Right ventricle myocardium superior (tissue), 1 donor: ENCODE measurements at regions of chr4 and their contacts with region 1.

Region 1: DNA sequence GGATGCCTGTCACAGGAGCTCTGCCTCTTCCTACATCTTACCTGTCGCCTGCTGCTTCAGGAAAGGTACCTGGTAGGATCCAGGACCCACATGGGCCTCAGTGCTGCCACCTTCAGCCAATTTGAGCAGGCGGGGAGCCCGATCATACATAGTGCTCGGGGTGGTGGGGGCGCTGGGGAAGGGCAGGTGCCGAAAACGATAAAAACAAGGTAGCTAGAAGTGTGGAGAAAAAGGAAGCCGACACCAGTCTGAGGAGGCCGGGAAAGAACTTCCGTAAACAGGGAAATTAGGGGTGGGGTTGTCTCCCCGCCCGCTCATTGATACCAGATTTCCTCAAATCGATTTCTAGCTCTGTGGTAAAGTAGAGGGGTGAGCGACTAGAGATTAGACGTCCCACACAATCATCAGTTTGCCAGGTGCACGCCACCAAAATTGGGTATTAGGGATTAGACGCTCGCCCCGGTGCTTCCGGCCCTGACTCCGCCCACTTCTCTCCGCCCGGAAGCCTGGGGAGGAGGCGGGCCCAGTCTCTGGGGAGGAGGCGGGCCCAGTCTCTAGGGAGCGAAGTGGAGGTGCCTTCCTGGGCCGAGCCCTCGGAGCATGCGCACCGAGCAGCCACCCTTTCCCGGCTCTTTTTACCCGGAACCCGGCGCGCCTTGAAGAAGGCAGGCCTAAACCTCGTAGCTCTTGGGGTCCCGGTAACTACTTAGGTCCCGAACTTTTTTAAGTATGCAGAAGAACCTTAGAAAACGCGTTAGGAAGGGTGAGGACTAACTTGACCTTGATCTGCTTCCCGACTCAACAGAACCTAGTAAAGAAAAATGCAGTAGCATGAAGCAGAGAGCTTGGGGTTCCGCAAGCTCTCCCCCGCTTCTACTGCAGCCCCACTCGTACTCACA is at the start of gene STPG2:
- DNase-seq: peak; percentile 96
- ATAC-seq: peak; percentile 100
- total RNA-seq, gene STPG2: 0.22 TPM

Region 2: DNA sequence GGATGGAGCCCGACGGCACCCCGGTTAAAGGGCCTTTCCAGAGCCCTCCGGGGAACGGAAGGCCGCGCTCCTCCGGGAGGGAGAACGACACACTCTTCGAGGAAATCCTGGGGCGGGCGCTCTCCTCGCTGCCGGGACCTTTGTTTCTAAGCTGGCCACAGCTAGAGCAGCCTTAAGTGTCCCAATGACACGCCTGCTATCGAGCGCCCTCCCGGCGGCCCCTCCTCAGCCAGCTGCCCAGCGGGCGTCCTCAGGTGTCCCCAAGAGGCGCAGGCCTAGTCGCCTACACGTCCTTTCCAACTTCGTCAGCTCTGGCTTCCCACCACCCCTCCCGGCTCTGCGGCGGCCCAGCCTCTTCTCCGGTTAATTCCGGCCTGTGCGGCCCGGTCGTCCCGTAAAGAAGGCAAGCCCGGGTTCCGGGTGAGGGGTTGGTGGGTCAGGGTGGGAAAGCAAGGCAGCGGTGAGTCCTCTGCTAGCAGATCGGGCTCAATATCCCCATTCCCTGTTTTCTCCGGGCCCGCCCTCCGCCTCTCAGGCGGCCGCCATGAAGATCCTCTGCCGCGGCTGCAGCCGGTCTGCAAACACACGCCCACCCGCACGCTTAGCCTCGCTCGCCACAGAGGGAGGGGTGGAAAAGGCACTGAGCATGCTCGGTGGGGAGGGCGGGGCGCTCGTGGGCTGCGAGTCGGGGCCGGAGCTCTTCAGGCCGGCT is 117.5 kb after region 1 on chr4:
- intact Hi-C with region 1: loop called (anchors 10 kb)
- DNase-seq: peak; percentile 98
- ATAC-seq: peak; percentile 97